ENCODE measurements at regions of chr15 and their contacts with region 1.

Region 1: DNA sequence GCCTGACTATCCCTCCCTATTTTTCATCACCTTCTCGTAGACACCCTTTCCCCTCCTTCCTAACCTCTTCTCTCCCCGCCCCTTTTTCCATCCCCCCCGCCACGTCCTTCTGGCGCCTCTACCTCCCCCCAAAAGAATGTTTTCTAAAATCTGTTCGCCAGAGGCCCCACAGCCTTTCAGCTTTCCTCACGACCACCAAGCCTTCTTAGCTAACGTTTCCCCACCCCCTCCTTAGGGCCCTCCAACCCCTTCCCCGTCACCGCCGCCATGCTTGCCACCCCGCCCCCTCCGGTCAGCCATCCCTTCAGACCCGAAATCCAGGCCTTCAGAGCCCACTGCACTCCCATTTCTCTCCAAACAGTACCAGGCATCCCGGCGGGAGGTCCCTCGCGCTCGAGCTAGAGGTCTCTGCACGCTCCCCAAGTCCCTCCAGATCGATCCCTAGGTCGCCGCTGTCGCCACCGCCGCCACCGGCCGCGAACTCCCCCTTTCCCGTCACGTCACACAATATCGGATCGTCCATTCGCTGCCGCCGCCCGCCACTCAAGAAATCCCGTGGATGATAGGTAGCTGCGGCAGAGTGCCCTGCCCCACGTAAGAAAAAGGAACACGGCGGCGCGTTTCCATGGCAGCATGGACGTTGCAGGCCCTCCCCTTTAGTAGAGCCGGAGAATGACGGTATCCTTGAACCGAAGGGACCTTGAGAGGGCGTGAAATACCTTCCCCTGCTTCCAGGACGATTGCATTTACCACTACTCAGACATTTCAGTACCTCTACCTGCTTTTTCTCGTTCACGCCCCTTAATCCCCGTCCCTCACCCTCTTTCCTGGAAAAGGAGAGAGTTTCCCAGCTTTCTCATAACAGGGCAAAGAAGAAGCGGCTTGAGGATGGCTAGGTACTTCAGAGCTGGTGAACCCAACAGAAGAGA is at the start of gene TP53BP1:
- DNase-seq: peak; percentile 99
- H3K4me3 ChIP-seq: peak within 1 kb of the TSS; percentile 58 to 95 (median 92)
- H3K27ac ChIP-seq: peak within 1 kb of the TSS; percentile 80 to 95 (median 86)
- H3K4me1 ChIP-seq: peaks cover 0 to 35% (median 22%) of the 10 kb centered on the region in 4 donors
- H3K27me3 ChIP-seq: no peaks in the 10 kb centered on the region
- CTCF ChIP-seq: no peak
- EP300 ChIP-seq: peak in 1 of 4 donors; percentile 18
- POLR2A ChIP-seq: peak in 1 of 2 donors; percentile 11
- total RNA-seq, gene TP53BP1: 38.3 to 63.4 (median 41.1) TPM

Region 2: DNA sequence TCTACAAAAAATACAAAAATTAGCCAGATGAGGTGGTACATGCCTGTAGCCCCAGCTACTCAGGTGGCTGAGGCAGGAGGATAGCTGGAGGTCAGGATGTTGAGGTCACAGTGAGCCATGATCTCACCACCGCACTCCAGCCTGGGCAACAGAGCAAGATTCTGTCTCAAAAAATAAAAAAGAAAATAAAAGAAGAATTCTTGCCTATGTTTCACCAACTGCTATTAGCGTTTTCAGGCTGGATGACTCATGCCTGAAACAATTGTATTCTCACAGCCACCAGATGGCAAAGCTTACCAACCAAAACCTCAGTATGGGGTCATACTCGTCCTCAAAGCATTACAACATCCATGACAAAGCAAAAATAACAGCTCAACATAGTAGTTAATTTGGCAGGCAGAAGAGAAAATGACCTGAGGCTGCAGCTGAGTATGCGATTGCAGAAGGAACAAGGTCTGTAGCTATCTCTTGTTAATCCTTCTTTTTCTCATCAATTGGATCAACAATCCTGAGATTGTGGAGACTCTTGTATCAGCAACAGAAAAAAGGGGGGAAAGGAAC is 52.1 kb before region 1 on chr15:
- intact Hi-C with region 1: loop called (anchors 5 kb)
- DNase-seq: peak; percentile 68
- H3K4me3 ChIP-seq: no peak overlapping the region
- H3K27ac ChIP-seq: peak overlapping the region; percentile 60 to 67 (median 64)
- H3K4me1 ChIP-seq: peaks cover 0 to 13% (median 8%) of the 10 kb centered on the region in 4 donors
- H3K27me3 ChIP-seq: no peaks in the 10 kb centered on the region
- CTCF ChIP-seq: peak; percentile 41 to 65 (median 50)
- EP300 ChIP-seq: no peak
- POLR2A ChIP-seq: no peak

Region 3: DNA sequence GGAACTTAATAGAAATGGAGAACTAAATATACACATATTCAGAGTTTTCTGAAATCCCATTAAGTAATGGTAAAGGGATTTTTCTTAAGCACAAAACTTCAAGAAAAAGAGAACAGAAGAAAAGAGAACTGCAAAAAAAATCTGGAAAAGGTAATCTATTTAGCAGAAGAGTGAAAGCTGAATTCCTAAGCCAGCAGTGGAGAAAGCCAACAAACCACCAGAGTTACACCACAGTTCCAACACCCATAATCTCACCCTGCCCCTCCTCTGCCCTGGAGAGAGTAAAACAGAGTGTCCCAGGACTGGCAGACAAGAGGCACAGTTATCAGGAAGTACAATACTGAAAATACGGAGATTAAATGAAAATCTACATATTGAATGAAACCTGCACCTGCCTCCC is 29.4 kb before region 1 on chr15:
- intact Hi-C with region 1: no loop called
- DNase-seq: no peak
- H3K4me3 ChIP-seq: no peak overlapping the region
- H3K27ac ChIP-seq: no peak overlapping the region
- H3K4me1 ChIP-seq: no peaks in the 10 kb centered on the region
- H3K27me3 ChIP-seq: no peaks in the 10 kb centered on the region
- CTCF ChIP-seq: no peak
- EP300 ChIP-seq: no peak
- POLR2A ChIP-seq: no peak

Region 4: DNA sequence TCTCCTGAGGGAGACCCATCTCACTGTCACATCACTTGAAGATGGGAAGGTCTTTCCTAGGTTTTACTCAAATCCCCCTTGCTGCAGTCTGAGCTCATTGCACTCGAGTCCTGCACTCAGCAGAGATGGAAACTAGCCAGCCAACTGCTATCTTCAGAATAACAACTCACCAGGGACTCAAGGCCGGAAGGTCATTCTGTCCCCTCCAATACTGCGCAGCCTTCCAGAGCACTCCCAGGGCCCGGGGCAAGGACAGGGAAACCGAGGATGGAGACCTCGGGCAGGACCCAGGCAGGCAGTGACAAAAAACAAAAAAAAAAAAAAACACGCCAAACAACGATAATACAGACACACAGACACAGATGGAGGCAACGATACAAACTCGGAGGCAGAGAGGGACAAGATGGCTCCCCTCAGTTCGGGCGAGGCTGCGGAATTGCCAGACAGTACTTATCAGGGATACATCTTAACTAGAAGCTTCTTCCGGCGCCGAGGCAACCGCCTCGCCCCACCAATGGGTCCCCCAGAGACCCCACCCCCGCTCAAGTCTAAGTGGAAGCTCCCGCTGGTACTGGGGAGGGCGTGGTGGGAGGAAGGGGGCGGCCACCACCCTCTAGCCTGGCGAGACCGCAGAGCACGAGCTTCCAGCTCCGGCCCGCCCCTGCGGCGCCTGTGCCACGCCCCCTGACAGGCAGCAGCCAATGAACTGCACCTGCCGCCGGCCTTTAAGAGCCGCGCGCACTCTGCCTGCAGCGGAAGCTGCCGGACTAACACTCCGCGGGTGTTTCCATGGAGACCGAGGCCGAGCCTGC is 17.5 kb after region 1 on chr15:
- intact Hi-C with region 1: loop called (anchors 2 kb)
- DNase-seq: peak; percentile 100
- H3K4me3 ChIP-seq: peak overlapping the region; percentile 52 to 63 (median 56)
- H3K27ac ChIP-seq: peak overlapping the region; percentile 84 to 93 (median 92)
- H3K4me1 ChIP-seq: peaks cover 0 to 46% (median 39%) of the 10 kb centered on the region in 4 donors
- H3K27me3 ChIP-seq: no peaks in the 10 kb centered on the region
- CTCF ChIP-seq: peak in 2 of 4 experiments; percentile 30 to 31
- EP300 ChIP-seq: no peak
- POLR2A ChIP-seq: peak; percentile 76 to 82

Region 5: DNA sequence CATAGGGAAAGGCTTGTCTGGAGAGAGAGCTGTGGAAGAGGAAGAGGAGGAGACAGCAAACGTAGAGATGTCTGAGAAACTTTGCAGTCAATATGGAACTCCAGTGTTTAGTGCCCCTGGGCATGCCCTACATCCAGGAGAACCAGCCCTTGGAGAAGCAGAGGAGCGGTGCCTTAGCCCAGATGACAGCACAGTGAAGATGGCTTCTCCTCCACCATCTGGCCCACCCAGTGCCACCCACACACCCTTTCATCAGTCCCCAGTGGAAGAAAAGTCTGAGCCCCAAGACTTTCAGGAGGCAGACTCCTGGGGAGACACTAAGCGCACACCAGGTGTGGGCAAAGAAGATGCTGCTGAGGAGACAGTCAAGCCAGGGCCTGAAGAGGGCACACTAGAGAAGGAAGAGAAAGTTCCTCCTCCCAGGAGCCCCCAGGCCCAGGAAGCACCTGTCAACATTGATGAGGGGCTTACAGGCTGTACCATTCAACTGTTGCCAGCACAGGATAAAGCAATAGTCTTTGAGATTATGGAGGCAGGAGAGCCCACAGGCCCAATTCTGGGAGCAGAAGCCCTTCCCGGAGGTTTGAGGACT is 31.4 kb after region 1 on chr15:
- intact Hi-C with region 1: loop called (anchors 5 kb)
- DNase-seq: no peak
- H3K4me3 ChIP-seq: no peak overlapping the region
- H3K27ac ChIP-seq: no peak overlapping the region
- H3K4me1 ChIP-seq: peaks cover 0 to 8% (median 2%) of the 10 kb centered on the region in 4 donors
- H3K27me3 ChIP-seq: no peaks in the 10 kb centered on the region
- CTCF ChIP-seq: no peak
- EP300 ChIP-seq: no peak
- POLR2A ChIP-seq: no peak

Region 6: GRCh38 chr15:43550527-43551363 is 57.8 kb after region 1 on chr15:
- intact Hi-C with region 1: no loop called
- DNase-seq: peak; percentile 30
- H3K4me3 ChIP-seq: no peak overlapping the region
- H3K27ac ChIP-seq: no peak overlapping the region
- H3K4me1 ChIP-seq: no peaks in the 10 kb centered on the region
- H3K27me3 ChIP-seq: no peaks in the 10 kb centered on the region
- CTCF ChIP-seq: no peak
- EP300 ChIP-seq: no peak
- POLR2A ChIP-seq: no peak